Upper lobe of right lung (tissue), 1 donor: ENCODE measurements at regions of chr10 and their contacts with region 1.

Region 1: DNA sequence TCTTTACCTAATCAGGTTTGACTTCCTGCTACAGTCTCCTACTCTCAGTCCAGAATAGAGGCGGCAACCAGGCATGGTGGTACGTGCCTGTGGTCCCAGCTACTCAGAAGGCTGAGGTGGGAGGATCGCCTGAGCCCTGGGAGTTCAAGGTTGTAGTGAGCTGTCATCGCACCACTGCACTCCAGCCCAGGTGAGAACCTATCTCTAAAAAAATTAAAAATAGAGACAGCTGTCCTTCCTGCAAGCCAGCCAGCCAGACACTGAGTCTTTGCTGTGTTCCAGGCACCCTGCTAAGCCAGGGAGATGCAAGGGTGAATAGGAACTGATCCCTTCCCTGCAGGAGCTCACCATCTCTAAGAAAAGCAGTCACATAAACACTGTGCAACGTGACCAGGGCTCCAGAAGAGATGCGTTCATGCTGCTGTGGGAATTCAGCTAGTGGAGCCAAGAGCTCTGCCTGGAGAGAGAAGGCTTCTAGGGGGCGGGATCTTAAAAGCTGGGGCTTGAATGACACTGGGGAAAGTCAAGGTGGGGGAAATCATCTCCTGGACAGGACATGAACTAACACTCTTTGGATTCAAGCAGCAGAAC is 22.1 kb upstream of the SLIT1 start:
- DNase-seq: no peak
- ATAC-seq: no peak
- H3K4me3 ChIP-seq: no peak overlapping the region
- H3K27ac ChIP-seq: no peak overlapping the region
- H3K4me1 ChIP-seq: no peaks in the 10 kb centered on the region
- H3K27me3 ChIP-seq: no peaks in the 10 kb centered on the region
- CTCF ChIP-seq: no peak

Region 2: DNA sequence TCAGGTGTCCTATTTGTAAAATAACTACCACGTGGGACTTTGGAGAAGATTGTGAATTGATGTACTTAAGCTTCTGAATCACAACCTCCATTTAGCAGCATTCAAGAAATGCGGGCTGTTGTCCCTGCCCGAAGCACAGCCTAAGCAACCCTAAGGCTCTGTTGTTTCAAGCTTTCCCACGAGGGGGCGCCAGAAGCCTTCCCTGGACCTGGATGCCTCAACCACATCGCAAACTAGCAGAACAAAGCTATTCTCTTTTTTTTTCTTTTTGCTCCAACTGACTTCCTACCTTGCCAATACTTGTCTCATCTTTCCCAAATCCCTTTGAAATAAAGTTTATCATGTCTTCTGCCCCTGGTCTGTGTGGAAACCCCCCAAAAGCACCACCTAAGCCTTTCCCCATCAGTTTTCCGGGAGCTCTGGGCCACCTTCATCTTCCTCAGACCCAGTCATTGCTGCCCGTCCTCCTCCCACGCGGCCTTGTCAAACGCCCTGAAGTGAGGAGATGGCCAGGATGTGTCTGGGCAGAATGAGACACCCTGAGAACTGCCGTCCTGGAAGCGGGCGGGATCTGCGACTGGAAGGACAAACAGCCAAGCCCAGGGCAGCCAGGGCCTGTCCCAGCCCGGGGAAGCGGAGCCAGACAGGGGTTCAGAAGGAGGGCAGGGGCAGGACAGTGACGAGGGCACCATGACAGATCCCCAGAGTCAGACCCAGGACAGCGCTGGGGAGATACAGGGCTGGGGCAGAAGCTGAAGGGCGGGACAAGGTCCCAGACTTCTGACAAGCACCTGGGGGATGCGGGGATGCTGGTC is 134.8 kb before region 1 on chr10:
- intact Hi-C with region 1: loop called (anchors 5 kb)
- DNase-seq: peak; percentile 83
- ATAC-seq: peak; percentile 82
- H3K4me3 ChIP-seq: no peak overlapping the region
- H3K27ac ChIP-seq: no peak overlapping the region
- H3K4me1 ChIP-seq: no peaks in the 10 kb centered on the region
- H3K27me3 ChIP-seq: peaks cover 31% of the 10 kb centered on the region
- CTCF ChIP-seq: peak; percentile 92